GM10248 (cell line): ENCODE measurements at regions of chr15 and their contacts with region 1.

Region 1: DNA sequence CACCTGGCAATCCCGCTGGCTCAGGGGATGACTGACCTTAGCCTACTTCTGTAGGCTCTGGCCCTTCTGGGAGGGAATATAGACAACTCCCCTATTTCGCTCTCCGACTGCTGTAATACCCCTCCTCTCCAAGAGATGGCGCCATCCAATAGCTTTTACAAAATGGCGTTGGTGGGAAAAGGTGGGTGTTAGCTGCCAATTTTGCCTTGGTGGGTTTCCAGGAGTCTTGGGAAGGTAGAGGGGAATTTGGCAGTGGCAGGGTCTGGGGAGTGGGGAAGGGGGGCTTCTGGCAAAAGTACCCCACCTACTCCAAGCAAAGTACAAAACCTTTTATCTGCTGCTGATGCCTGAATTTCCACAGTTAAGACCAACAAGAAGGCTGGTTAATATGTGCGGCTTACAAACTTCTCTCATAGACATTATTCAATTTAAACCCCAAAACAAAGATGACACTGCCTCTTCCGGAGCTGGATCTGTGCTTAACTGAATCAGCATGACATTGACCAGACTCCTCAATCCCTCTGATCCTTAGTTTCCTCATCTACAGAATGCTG is 62.1 kb downstream of the RASGRF1 start:
- DNase-seq: peak; percentile 73
- CTCF ChIP-seq: peak; percentile 87

Region 2: DNA sequence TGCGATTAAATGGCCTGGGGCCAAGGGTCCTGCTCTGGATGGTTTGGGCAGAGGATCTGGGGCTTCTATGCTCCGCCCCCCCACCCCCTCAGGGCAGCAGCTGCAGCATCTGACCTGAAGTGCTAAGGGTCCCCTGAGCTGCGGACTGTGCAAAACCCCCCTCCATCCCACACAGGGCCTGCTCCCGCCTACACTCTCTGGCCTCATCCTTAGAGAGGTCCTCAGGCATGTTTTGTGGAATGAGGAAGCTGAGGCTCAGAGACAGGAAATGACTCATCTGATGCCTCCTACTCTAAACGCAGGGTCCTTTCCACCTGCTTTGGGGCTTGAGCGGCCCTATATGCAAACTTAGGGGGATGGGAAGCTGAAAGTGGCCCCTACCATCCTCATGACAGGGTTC is 24.2 kb before region 1 on chr15:
- CTCF ChIA-PET with region 1: interaction called, 10 read pairs
- POLR2A ChIA-PET with region 1: no interaction called
- DNase-seq: peak; percentile 85
- CTCF ChIP-seq: no peak

Region 3: DNA sequence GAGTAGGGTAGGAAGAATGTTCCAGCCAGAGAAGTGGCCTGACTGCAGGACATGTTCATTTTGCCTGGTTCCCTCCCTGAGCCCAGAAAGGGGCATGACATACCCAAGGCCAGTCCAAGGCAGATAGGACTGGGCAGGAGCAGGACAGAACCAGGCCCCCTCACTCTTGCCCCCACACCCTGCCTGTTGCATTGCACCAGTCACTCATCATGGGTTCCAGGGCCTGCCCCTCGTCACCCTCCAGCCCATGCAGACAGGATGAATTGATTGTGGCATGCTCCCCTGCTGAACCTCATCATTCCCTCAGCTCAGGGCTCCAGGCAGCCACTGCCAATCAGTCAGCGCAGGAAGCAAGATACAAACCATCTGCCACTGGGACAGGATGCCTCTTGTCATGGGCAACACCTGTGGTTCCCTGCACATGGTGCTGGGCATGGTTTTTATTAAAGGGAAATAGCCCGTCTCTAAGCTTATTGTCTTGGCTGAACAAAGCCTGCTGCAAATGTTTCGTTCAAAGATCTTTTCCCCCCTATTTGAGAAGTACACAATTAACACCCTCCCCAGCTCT is 13.2 kb after region 1 on chr15:
- CTCF ChIA-PET with region 1: interaction called, 20 read pairs
- POLR2A ChIA-PET with region 1: no interaction called
- DNase-seq: no peak
- CTCF ChIP-seq: no peak

Region 4: GRCh38 chr15:79192462-79193036 is 164.1 kb after region 1 on chr15:
- CTCF ChIA-PET with region 1: interaction called, 22 read pairs
- POLR2A ChIA-PET with region 1: no interaction called
- DNase-seq: no peak
- CTCF ChIP-seq: no peak